ENCODE measurements at regions of chr18 and their contacts with region 1.

Region 1: DNA sequence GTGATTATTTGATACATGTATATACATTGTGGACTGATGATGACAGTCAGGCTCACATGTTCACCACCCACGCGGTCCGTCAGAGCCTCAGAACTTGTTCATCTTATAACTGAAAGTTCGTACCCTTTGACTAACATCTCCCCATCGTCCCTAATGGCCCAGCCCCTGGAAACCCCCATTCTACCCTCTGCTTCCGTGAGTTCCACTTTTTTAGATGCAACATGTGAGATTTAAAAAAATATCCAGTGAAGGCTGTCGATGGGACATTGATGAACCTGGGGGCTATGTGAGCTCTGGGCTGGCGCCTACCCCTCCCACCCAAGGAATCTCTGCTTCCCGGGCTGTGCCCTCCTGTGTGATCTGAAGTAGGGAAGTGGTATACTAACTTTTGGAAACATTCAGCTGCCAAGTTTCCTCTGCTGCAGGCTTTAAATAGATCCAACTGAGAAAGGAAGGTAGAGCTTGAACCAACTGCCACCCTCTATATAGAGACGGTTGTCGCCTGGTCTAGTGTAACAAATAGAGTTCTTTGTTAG is 163.8 kb downstream of the FAM210A start:
- DNase-seq: peak; percentile 79
- CTCF ChIP-seq: no peak

Region 2: DNA sequence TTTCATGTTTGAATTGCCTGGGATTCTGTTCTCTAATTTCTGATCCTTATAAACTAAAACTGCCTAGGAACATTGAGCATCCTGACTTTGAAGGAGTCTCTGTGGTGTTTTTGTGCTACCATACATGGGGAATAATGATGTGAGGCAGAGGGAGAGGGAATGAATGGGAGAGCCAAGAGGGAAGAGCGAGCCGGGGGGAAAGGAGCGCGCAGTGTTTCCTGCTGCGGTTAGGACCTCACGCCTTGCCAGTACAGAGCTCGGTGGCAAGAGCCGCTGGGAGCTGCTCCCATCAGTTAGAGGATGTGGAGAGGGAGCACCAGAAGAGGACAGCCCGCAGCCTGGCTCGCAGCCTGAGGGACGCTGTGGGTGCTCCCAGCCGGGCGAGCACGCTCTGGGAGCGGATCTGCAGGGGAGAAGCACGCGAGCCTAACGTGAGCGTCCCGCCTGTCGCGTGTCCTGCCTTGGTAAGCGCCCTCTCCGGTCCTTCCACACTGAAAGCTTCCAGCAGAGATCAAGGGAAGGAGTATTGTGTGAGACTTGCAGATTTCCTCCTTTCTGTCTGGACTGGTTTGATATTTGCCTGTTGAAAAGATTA is 49.1 kb after region 1 on chr18:
- in situ Hi-C with region 1: loop called (anchors 5 kb)
- DNase-seq: no peak
- CTCF ChIP-seq: no peak